ENCODE measurements at regions of chr3 and their contacts with region 1.

Region 1: DNA sequence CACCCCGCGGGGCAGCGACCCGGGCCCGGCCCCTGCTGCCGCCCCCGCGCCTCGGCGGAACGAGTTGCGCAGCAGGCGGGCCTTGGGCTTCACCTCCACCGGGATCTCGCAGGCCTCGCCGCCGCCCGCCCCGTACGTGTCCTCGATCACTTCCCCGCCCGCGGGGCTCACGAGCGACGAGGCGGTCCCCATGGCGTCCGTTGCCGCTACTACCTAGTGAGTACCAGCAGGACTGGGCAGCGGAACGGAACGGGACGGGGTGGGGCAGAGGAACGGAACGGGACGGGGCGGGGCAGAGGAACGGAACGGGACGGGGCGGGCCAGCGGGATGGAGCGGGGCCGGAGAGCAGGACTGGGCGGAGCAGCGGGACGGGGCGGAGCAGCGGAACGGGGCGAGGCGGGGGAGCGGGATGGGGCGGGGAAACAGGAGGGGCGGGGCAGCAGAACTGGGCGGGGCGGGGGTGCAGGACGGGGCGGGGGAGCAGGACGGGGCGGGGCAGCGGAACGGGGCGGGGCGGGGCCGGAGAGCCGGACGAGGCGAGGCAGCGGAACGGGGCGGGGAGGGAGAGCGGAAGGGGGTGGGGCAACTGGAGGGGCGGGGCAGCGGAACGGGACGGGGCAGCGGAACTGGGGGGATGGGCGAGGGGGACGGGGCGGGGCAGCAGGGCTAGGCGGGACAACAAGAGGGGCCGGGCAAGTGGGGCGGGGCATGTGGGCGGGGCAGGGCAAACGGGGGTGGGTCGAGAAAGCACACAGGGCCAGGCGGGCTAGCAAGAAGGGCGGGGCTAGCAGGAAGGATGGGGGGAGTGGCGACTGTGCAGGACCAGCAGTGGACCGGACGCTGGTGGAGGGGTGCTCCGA is at the start of gene NPHP3:
- DNase-seq: peak; percentile 92 to 94 (median 92)
- ATAC-seq: peak; percentile 91
- H3K4me3 ChIP-seq: peak within 1 kb of the TSS; percentile 70
- H3K27ac ChIP-seq: peak within 1 kb of the TSS; percentile 80
- H3K4me1 ChIP-seq: peaks cover 9 to 16% of the 10 kb centered on the region in 2 experiments; a peak in 4 of 5 replicates
- H3K27me3 ChIP-seq: no peaks in the 10 kb centered on the region
- CTCF ChIP-seq: no peak
- EP300 ChIP-seq: no peak
- POLR2A ChIP-seq: peak; percentile 36
- RAD21 ChIP-seq: no peak
- polyA plus RNA-seq, gene NPHP3: 0.62 to 1.8 TPM

Region 2: GRCh38 chr3:132659365-132660051 is 62.9 kb before region 1 on chr3 and contains the start of gene ACAD11:
- CTCF ChIA-PET with region 1: no interaction called
- POLR2A ChIA-PET with region 1: no interaction called
- in situ Hi-C with region 1: no loop called
- intact Hi-C with region 1: loop called (anchors 2 kb)
- DNase-seq: peak; percentile 38 to 63 (median 52)
- ATAC-seq: peak; percentile 81
- H3K4me3 ChIP-seq: peak within 1 kb of the TSS; percentile 91
- H3K27ac ChIP-seq: peak within 1 kb of the TSS; percentile 91
- H3K4me1 ChIP-seq: peaks cover 0 to 9% of the 10 kb centered on the region in 2 experiments; a peak in 4 of 5 replicates
- H3K27me3 ChIP-seq: no peaks in the 10 kb centered on the region
- CTCF ChIP-seq: peak; percentile 56 to 76 (median 60)
- EP300 ChIP-seq: no peak
- POLR2A ChIP-seq: no peak
- RAD21 ChIP-seq: peak in 1 of 2 experiments; percentile 39; a peak in 2 of 4 replicates
- polyA plus RNA-seq, gene ACAD11: 1.3 to 2.1 TPM

Region 3: GRCh38 chr3:133426721-133427120 is 704.3 kb after region 1 on chr3:
- CTCF ChIA-PET with region 1: no interaction called
- POLR2A ChIA-PET with region 1: no interaction called
- in situ Hi-C with region 1: loop called (anchors 10 kb)
- intact Hi-C with region 1: no loop called
- DNase-seq: no peak
- ATAC-seq: no peak
- H3K4me3 ChIP-seq: no peak overlapping the region
- H3K27ac ChIP-seq: no peak overlapping the region
- H3K4me1 ChIP-seq: no peaks in the 10 kb centered on the region
- H3K27me3 ChIP-seq: peaks cover 0 to 4% of the 10 kb centered on the region in 2 experiments; a peak in 2 of 5 replicates
- CTCF ChIP-seq: no peak
- EP300 ChIP-seq: no peak
- POLR2A ChIP-seq: no peak
- RAD21 ChIP-seq: no peak

Region 4: GRCh38 chr3:133573054-133573628 is 850.7 kb after region 1 on chr3:
- CTCF ChIA-PET with region 1: no interaction called
- POLR2A ChIA-PET with region 1: no interaction called
- in situ Hi-C with region 1: no loop called
- intact Hi-C with region 1: loop called (anchors 10 kb)
- DNase-seq: peak; percentile 81 to 98 (median 89)
- ATAC-seq: peak; percentile 93
- H3K4me3 ChIP-seq: peak overlapping the region; percentile 80
- H3K27ac ChIP-seq: peak overlapping the region; percentile 95
- H3K4me1 ChIP-seq: peaks cover 7 to 20% of the 10 kb centered on the region in 2 experiments; a peak in 4 of 5 replicates
- H3K27me3 ChIP-seq: no peaks in the 10 kb centered on the region
- CTCF ChIP-seq: peak in 2 of 3 experiments; percentile 3 to 19; a peak in 3 of 6 replicates
- EP300 ChIP-seq: no peak
- POLR2A ChIP-seq: peak; percentile 87
- RAD21 ChIP-seq: no peak

Measured in K562 (cell line).